ENCODE measurements at regions of chr20 and their contacts with region 1.

Region 1: DNA sequence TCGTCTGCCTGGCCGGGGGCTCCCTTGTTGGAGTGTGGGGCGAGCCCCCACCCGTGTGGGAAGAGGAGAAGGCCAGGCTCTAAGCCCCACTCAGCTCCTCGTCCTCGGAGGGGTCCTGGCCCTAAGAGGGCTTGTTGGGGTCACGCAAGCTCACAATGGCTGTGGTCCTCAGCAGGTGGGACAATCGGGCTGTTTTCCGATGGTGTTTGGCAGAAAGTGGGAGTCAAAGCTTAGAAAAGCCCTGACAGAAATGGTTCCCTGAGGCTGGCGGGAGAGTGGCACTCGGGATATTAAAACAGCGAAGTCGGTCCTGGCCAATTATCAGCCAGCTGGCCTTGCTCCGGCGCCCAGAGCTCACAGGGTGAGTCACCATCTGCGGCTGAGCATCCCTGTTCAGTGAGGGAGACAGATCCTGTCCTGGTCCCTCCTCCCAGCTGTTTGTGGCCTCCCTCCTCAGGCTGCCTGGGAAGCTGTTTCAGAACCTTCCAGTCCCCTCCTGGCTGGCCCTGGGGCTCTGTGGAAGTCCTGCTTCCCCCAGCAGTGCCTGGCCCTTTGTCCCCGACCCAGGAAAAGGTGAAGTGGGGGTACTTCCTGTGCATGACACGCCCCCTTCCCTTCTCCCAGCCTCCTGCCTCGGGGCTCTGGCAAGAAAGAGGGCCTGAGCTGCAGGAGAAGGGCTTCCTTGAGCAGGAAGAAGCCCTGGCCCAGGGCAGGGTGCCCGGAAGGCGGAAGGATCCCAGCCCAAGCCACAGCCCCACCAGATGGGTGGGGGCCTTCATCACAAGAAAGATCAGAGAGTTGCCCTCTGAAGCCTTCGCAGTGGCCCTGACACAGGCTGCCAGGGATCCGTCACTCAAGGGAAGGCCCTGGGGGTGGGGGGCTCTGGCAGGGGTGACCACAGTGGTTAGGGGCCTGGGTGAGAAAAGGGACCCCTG is 53.6 kb upstream of the BHLHE23 start:
- DNase-seq: no peak
- H3K4me3 ChIP-seq: no peak overlapping the region
- CTCF ChIP-seq: no peak

Region 2: GRCh38 chr20:62995898-62996595 is 64.3 kb before region 1 on chr20:
- in situ Hi-C with region 1: no loop called
- DNase-seq: no peak
- H3K4me3 ChIP-seq: no peak overlapping the region
- CTCF ChIP-seq: no peak

Region 3: GRCh38 chr20:63009045-63009961 is 51.0 kb before region 1 on chr20:
- in situ Hi-C with region 1: no loop called
- DNase-seq: peak; percentile 12
- H3K4me3 ChIP-seq: no peak overlapping the region
- CTCF ChIP-seq: peak; percentile 90

Region 4: DNA sequence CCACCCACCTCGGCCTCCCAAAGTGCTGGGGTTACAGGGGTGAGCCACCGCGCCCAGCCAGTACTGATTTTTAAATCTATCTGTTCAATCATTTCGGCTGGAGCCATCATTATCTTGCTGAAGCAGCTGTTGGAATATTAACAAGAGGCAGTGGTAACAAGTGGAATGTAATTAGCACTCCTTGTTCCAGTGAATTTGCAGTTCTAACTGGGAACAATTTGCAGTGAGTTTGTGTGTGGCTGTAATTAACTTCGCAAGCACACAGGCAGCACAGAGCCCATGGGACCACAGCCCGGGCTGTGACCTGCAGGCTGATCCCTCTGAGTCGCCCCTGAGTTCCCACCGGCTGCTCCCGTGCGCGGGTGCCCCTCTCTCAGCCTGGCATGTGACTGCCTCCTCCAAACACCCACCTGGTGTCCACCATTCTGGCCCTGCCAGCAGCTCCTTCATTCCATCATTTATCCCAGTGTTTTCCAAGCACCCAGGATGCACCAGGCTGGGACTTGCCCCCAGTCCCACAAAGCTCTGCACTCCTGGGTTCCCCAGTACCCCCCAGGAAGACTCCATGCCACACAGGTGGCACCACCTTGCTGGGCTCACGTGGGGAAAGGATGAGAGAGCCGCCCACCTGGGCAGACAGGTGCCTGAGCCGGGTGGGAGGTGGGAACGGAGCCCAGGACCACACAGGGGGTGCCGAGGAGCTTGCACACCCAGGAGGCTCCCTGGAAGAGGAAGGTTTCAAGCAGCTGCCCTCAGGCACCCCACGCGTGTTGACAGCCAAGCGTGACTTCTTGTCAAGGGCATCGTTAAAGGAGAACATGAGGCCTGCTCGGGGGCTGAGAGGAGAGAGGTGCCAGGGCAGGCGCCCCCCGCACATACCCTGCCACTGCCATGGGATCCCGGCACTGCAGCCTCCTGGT is 80.5 kb after region 1 on chr20:
- in situ Hi-C with region 1: loop called (anchors 5 kb)
- DNase-seq: no peak
- H3K4me3 ChIP-seq: no peak overlapping the region
- CTCF ChIP-seq: no peak

Region 5: DNA sequence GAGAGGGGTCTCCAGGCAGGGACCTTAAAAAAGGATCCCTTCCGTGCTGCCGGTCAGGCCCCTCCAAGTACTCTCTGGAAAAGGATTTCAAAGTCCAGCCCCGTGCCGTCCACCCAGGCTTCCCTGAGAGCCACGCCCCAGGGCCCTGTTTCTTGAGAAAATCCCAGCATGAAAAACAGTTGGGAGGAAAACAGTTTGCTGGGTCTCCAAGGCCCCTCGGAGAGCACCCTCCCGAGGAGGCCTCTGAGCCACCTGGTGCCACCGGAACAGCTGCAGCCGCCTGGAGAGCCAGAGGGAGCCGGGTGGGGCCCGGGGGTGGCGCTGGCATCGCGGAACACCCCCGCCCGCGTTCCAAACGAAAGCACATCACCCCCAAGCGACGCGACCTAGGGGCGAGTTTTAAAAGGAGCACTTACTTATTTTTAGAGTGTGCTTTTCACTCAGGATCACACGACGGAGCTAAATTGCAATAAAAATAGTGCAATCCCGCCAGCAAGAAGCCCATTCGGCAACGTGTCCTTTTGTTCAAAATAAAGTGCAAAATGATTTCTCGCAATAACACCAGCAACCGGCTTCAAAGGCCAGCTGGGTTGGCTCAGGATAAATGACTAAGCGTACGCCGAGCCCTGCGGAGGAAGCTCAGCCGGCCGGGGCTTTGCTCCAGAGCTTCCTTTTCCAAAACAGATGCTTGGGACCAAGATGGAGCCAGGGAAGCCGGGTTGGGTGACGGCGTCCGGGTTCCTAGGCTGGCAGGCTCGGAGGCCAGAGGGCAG is 91.4 kb after region 1 on chr20:
- in situ Hi-C with region 1: no loop called
- DNase-seq: no peak
- H3K4me3 ChIP-seq: no peak overlapping the region
- CTCF ChIP-seq: no peak